WTC11 (cell line): ENCODE measurements at regions of chr12 and their contacts with region 1.

Region 1: GRCh38 chr12:123232807-123233543 is at the starts of genes MPHOSPH9 and MTRFR:
- DNase-seq: peak; percentile 99
- ATAC-seq: peak; percentile 94
- H3K4me3 Mint-ChIP-seq: peak within 1 kb of the TSS; percentile 89
- H3K27ac Mint-ChIP-seq: peak within 1 kb of the TSS; percentile 98
- H3K4me1 Mint-ChIP-seq: peaks cover 18% of the 10 kb centered on the region
- H3K27me3 Mint-ChIP-seq: no peaks in the 10 kb centered on the region
- CTCF ChIP-seq: no peak
- total RNA-seq, gene MPHOSPH9: 47.5 to 59.0 TPM (median 52.8 TPM) in 3 replicates
- total RNA-seq, gene MTRFR: 14.0 to 15.7 TPM (median 14.7 TPM) in 3 replicates

Region 2: DNA sequence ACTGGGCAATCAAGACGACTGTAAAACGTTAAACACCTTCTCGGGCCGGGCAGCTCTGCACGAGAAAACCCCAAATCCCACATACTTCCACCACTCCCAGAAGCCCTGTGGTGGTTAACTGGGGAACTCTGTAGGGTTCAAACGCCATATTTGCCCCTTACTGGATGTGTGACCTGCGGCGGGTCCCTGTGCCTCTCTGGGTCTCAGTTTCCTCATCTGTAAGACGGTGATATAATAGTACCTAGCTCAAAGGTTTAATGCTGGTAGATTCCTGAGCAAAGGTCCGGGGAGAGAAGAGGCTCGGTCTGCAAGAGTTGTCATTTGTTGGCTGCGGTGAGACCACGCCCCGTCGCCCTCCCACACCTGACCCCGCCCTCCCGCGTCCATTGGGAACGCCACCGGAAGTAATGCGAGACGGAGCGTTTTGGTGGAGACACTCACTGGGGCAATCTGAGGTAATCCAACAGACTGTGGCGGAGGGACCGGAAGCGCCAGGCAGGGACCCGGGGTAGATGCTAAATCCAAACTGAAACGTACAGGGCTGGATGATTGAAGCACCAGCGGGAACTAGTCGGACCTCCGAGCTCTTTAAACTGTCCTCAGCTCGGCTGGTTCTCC is 258.6 kb before region 1 on chr12:
- CTCF ChIA-PET with region 1: interaction called, 9 read pairs
- POLR2A ChIA-PET with region 1: interaction called, 11 read pairs
- DNase-seq: peak; percentile 99
- ATAC-seq: peak; percentile 82
- H3K4me3 Mint-ChIP-seq: peak overlapping the region; percentile 96
- H3K27ac Mint-ChIP-seq: peak overlapping the region; percentile 99
- H3K4me1 Mint-ChIP-seq: peaks cover 9% of the 10 kb centered on the region; the same call in 1 of the 2 replicates
- H3K27me3 Mint-ChIP-seq: no peaks in the 10 kb centered on the region
- CTCF ChIP-seq: no peak

Region 3: GRCh38 chr12:123043536-123044001 is 189.4 kb before region 1 on chr12:
- CTCF ChIA-PET with region 1: interaction called, 42 read pairs
- POLR2A ChIA-PET with region 1: interaction called, 4 read pairs
- DNase-seq: peak; percentile 74
- ATAC-seq: peak; percentile 91
- H3K4me3 Mint-ChIP-seq: no peak overlapping the region
- H3K27ac Mint-ChIP-seq: no peak overlapping the region
- H3K4me1 Mint-ChIP-seq: no peaks in the 10 kb centered on the region
- H3K27me3 Mint-ChIP-seq: no peaks in the 10 kb centered on the region; the same call in 1 of the 2 replicates
- CTCF ChIP-seq: no peak

Region 4: DNA sequence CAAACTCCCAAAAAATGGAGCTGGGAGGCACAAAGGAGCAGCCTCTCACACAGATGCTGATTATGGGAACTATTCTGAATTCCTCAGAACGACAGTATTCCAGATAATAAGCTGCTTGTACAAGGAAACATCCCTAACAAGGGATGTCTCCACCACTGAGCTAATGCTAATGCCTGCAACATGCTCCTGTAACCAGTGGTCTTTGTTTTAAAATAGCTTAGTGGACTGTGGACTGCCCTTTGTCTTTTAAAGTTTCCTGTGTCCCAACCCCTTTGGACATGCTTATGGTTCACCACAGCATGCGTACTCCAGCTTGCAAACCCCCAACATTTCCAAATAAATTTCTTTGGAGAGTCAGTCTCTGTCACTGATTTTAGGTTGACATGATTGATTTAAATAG is 65.6 kb before region 1 on chr12:
- CTCF ChIA-PET with region 1: no interaction called
- POLR2A ChIA-PET with region 1: no interaction called
- DNase-seq: no peak
- ATAC-seq: 0 out of 2 replicates have a peak, but pooled peaks have one; percentile 24
- H3K4me3 Mint-ChIP-seq: no peak overlapping the region
- H3K27ac Mint-ChIP-seq: peak overlapping the region; percentile 76; the same call in 1 of the 2 replicates
- H3K4me1 Mint-ChIP-seq: peaks cover 10% of the 10 kb centered on the region
- H3K27me3 Mint-ChIP-seq: no peaks in the 10 kb centered on the region
- CTCF ChIP-seq: no peak

Region 5: DNA sequence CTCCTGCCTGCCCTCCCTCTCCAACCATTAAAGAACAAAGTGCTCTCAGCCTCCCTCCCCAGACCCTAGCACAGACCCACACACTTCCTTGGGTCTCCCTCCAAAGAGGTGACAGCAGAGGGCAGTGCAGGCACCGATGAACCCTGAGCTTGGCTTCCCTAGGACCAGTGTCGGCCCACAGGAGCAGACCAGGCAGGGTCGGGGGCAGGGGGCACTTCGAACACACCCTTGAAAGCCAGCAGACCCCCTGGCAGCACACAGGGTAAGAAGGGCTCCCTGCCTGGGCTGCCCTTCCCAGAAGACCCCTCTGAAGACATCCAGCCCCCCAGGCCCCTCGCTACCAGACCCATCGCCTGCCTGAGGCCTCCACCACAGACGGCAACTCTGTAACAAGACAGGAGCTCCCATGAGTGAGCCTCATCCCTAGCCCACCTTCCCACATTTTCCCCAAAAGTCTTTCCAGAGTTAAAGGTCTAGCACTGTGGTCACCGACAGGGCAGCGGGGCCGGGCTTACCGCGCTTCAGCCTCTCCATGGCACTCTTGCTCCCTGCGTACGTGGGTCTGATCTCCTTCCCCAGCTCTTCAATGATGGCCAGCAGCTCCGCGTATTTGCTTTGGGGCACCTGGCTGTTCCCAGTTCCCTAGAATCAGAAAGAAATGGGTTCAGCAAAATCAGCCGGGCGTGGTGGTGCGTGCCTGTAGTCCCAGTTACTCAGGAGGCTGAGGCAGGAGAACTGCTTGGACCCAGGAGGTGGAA is 31.9 kb after region 1 on chr12:
- CTCF ChIA-PET with region 1: interaction called, 15 read pairs
- POLR2A ChIA-PET with region 1: interaction called, 15 read pairs
- DNase-seq: peak; percentile 62
- ATAC-seq: peak; percentile 71
- H3K4me3 Mint-ChIP-seq: no peak overlapping the region
- H3K27ac Mint-ChIP-seq: peak overlapping the region; percentile 73
- H3K4me1 Mint-ChIP-seq: peaks cover 34% of the 10 kb centered on the region
- H3K27me3 Mint-ChIP-seq: no peaks in the 10 kb centered on the region
- CTCF ChIP-seq: no peak

Region 6: GRCh38 chr12:123337070-123337469 is 104.1 kb after region 1 on chr12:
- CTCF ChIA-PET with region 1: no interaction called
- POLR2A ChIA-PET with region 1: no interaction called
- DNase-seq: no peak
- ATAC-seq: no peak
- H3K4me3 Mint-ChIP-seq: no peak overlapping the region
- H3K27ac Mint-ChIP-seq: no peak overlapping the region
- H3K4me1 Mint-ChIP-seq: no peaks in the 10 kb centered on the region
- H3K27me3 Mint-ChIP-seq: no peaks in the 10 kb centered on the region
- CTCF ChIP-seq: no peak

Region 7: GRCh38 chr12:123365025-123365917 is 132.3 kb after region 1 on chr12:
- CTCF ChIA-PET with region 1: interaction called, 7 read pairs
- POLR2A ChIA-PET with region 1: interaction called, 10 read pairs
- DNase-seq: peak; percentile 98
- ATAC-seq: peak; percentile 79
- H3K4me3 Mint-ChIP-seq: peak overlapping the region; percentile 79
- H3K27ac Mint-ChIP-seq: peak overlapping the region; percentile 96
- H3K4me1 Mint-ChIP-seq: peaks cover 12% of the 10 kb centered on the region
- H3K27me3 Mint-ChIP-seq: no peaks in the 10 kb centered on the region; the same call in 1 of the 2 replicates
- CTCF ChIP-seq: peak; percentile 32; the same call in 1 of the 2 replicates